Posterior cingulate gyrus (tissue), 11 donors: ENCODE measurements at regions of chr1 and their contacts with region 1.

Region 1: DNA sequence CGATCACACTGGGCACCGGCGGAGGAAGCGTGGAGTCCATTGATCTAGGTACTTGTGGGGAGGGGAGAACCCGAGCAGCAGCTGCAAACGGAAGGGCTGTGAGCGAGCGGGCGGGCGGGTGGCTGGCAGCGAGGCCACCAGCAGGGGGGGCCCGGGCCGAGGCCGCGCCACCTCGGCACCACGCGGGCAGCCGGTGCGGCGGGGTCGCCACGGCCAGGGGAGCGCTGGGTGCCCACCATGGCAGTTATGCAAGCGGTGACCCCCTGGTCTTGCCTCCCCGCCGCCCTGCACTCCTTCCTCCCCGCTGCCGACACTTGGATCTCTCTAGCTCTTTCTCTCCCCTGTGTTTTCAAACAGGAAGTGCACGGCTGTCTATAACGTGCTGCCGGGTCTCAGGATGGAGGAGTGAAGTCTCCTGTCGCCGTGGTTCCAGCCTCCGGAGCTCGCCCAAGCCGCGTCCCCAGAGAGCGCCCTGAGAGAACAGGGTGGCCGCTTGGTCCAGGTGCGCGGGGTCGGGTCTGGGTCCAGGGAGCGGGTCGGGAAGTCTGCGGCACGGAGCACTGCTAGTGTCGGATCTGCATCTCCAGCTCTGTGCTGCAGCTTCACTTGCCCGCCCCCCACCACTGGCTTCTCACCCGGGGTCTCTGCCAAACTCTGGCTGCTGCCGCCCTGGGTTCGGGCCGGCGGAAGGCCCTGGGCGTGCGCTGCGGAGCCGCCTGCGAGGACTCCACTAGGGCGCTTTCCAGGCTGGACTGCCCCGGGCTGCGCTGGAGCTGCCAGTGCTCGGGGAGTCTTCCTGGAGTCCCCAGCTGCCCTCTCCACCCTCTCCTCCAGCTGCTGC is 22.7 kb downstream of the LRRC8D start:
- DNase-seq: peak; percentile 56 to 95 (median 72)

Region 2: DNA sequence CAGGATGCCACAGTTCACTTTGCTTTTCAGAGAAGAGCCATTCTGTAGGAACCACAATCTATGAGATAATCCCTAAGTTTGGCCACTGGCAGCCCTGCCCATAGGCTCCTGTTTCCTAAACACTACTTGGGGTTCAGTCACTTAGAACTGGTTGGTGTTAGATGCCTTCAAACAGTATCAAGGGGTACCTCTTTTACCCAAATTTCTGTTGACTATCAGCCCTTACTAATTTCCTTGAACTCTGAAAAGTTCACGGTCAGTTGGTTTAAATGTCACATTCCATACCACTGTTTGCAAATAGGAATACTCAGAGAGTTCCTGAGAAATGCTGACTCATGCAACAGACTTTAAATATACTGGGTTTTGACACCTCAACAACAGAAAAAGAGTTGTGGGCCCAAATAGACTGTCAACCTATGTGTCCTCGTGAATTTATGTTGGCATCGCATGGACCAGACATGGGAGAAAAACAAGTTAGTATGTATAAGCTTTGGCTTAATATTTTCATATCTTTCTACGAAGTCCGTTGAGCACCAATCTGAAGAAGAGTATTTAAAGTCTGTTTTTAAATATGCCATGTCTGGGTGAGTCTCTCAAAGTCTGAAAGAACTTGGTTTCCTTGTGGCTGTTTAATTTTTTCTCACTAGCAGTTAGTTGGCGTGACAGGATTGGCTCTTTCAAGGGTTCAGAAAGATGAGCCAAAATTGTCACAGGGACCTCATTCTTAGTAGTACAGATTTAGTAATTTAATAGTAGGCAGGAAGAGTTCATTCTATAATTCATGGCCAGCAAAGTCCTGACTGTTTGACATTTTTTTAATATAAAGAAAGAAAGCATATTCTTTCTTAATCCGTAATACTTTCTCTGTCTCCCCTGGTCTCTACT is 94.9 kb after region 1 on chr1:
- intact Hi-C with region 1: loop called (anchors 5 kb)
- DNase-seq: no peak